ENCODE measurements at regions of chr2 and their contacts with region 1.

Region 1: GRCh38 chr2:144630459-144631215 is 110.7 kb upstream of the ZEB2 start:
- DNase-seq: no peak
- ATAC-seq: no peak
- H3K4me3 ChIP-seq: no peak overlapping the region
- H3K27ac ChIP-seq: no peak overlapping the region
- H3K4me1 ChIP-seq: peaks cover 0 to 3% (median 0%) of the 10 kb centered on the region in 12 donors
- H3K27me3 ChIP-seq: no peaks in the 10 kb centered on the region
- CTCF ChIP-seq: no peak
- POLR2A ChIP-seq: no peak

Region 2: DNA sequence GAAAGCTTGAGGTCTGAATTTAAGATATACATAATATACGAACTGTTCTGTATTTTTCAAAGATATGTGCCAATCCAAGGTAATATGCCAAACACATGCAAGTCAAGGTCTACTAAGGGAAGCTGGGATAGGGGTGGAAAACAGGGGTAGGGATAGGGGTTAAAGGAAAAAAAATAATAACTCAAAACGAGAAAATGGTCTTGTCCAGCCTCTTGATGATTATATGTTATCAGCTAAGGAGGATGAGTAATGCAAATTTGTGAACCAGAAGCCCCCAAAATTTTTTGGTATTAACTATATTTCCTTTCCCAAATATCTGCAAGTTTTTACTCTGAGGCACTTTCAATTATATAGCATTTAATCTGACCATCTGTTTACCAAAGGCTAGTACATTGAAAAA is 330.0 kb before region 1 on chr2:
- intact Hi-C with region 1: no loop called
- DNase-seq: no peak
- ATAC-seq: no peak
- H3K4me3 ChIP-seq: no peak overlapping the region
- H3K27ac ChIP-seq: no peak overlapping the region
- H3K4me1 ChIP-seq: peaks cover 0 to 4% (median 0%) of the 10 kb centered on the region in 12 donors
- H3K27me3 ChIP-seq: no peaks in the 10 kb centered on the region
- CTCF ChIP-seq: no peak
- POLR2A ChIP-seq: no peak

Region 3: DNA sequence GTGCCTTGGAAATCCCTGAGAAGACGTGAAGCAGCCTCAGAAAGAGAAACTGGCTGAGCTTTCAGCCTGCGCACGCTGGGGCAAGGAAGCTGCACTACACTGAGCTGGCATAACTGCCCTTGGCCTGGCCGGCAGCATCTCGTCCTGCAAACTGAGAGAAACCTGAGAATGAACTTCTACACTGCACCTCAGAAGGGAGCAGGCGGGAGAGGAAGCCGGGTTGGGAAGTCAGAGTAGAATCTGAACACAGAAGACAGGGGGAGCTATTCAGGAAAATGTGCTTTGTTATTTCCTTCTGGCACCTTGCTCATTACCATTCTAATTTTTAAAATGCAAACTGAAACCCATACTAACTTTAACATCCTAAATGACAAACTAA is 181.6 kb before region 1 on chr2:
- intact Hi-C with region 1: no loop called
- DNase-seq: peak in 2 of 5 donors; percentile 42 to 56
- ATAC-seq: peak; percentile 33 to 74 (median 60)
- H3K4me3 ChIP-seq: peak overlapping the region in 7 of 12 donors; percentile 10 to 29 (median 23)
- H3K27ac ChIP-seq: peak overlapping the region; percentile 23 to 63 (median 58)
- H3K4me1 ChIP-seq: peaks cover 0 to 86% (median 45%) of the 10 kb centered on the region in 12 donors
- H3K27me3 ChIP-seq: no peaks in the 10 kb centered on the region
- CTCF ChIP-seq: peak in 11 of 12 donors; percentile 17 to 63 (median 46)
- POLR2A ChIP-seq: no peak

Region 4: DNA sequence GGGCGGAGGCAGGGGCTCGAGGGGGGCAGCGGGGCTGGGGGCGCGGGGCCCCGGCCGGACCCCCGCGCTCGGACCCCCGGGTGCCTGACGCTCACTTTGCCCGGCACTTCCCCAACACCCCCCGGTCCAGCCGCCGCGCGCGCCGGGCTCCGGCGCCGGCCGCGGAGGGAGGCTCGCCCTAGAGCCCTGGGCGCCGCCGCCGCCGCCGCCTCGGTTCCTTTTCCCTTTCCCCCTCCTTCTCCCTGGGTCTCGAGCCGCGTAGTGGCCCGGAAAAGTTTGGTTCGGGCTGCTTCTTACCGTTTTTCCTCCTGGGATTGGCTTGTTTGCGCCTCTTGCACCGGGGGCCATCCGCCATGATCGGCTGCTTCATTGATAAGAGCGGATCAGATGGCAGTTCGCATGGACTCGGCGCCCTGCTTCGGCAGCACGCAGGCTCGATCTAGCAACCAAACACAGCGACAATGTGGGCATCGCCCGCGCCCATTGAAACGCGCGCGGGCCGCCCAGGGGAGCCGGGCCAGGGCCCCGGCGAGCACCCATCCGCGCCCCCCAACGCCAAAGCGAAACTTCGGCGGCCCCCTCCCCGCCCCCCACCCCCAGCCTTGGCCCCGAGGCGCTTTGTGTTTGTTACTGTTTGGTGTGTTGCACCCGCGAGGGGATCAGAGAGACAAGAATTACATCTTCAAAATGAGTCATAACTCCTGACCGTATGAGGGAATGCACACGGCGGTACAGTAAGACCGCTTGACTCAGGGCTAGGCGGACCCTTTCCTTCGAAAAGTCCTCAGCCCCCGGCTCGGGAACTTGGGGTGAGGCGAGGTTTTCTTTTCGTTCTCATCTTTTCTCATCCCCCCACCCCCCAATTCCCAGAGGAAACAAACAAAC is 113.4 kb before region 1 on chr2:
- intact Hi-C with region 1: no loop called
- DNase-seq: peak; percentile 56 to 82 (median 73)
- ATAC-seq: peak; percentile 9 to 71 (median 54)
- H3K4me3 ChIP-seq: peak overlapping the region; percentile 63 to 96 (median 82)
- H3K27ac ChIP-seq: peak overlapping the region; percentile 91 to 99 (median 98)
- H3K4me1 ChIP-seq: peaks cover 0 to 31% (median 13%) of the 10 kb centered on the region in 12 donors
- H3K27me3 ChIP-seq: peaks cover 0 to 6% (median 0%) of the 10 kb centered on the region in 9 donors
- CTCF ChIP-seq: no peak
- POLR2A ChIP-seq: peak in 1 of 2 donors; percentile 17

Region 5: DNA sequence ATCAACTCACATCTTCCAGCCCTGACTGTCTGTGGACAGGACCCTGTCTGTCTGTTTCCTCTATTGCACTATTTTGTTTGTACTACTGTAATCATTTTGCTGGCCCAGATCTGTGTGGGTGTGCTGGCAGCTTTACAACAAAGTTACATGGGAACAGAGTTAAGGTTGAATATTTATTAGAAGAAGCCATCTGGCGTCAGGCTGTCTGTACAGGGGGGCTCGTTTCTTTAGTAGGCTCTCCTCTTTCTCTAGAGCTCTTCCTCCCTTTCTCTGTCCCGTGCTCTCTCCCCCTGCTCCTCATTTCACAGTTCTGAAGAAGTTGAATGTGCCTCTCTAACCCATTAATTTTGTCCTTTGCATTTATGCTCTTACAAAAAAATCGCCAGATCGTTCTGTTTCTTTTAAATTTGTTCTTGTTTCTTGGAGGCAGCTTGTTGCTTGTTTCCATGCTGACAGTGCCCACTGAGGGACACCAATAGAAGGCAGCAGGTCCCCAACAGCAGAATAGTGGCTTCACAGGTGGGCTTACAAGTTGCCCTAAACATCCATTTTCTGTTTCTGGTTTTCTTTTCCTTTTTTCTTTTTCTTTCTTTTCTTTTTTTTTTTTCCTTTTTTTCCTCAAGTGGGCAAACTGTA is 204.5 kb after region 1 on chr2:
- intact Hi-C with region 1: loop called in 1 of 10 experiments (anchors 5 kb)
- DNase-seq: peak; percentile 39 to 65 (median 52)
- ATAC-seq: peak; percentile 25 to 85 (median 69)
- H3K4me3 ChIP-seq: no peak overlapping the region
- H3K27ac ChIP-seq: peak overlapping the region in 10 of 12 donors; percentile 12 to 61 (median 49)
- H3K4me1 ChIP-seq: peaks cover 0 to 24% (median 6%) of the 10 kb centered on the region in 12 donors
- H3K27me3 ChIP-seq: no peaks in the 10 kb centered on the region
- CTCF ChIP-seq: no peak
- POLR2A ChIP-seq: no peak

Measured in heart left ventricle (tissue), 16 donors.